ENCODE measurements at regions of chr6 and their contacts with region 1.

Region 1: DNA sequence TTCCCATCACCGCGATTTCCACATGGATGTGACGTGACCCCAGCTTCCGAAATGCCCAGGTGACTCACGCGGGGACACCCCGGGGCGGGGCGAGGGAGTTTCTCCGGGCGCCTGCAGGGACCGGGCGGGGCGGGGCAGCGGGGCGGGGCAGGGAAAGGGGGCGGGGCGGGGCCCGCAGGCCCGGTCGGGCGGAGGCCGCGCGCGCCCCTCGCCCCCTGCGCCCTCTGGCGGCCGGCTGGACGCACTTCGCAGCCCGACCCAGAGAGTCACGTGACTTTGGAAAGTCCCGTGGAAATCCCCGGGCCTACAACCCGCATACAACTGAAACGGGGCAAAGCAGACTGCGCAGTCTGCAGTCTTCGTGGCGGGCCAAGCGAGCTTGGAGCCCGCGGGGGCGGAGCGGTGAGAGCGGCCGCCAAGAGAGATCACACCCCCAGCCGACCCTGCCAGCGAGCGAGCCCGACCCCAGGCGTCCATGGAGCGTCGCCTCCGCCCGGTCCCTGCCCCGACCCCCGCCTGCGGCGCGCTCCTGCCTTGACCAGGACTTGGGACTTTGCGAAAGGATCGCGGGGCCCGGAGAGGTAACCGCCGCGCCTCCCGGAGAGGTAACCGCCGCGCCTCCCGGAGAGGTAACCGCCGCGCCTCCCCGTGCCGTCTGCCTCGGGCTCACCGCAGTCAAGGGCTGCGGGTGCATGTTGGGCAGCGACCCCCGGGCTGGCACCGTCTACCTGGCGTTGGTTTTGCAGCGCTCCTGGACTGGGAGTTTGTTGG is at the start of gene TNFAIP3:
- DNase-seq: peak; percentile 96 to 97 (median 97)
- H3K4me3 ChIP-seq: peak within 1 kb of the TSS; percentile 78 to 93
- H3K4me3 Mint-ChIP-seq: peak within 1 kb of the TSS; percentile 89 to 100 (median 96)
- H3K27ac ChIP-seq: peak within 1 kb of the TSS; percentile 99
- H3K27ac Mint-ChIP-seq: peak within 1 kb of the TSS; percentile 96 to 99 (median 99)
- H3K4me1 ChIP-seq: peaks cover 32% of the 10 kb centered on the region
- H3K4me1 Mint-ChIP-seq: peaks cover 29 to 68% (median 42%) of the 10 kb centered on the region in 4 donors
- H3K27me3 ChIP-seq: no peaks in the 10 kb centered on the region
- H3K27me3 Mint-ChIP-seq: peaks cover 0 to 4% of the 10 kb centered on the region in 2 donors
- total RNA-seq, gene TNFAIP3: 145 to 165 TPM

Region 2: GRCh38 chr6:137707590-137708360 is 159.3 kb before region 1 on chr6:
- CTCF ChIA-PET with region 1: interaction called, 74 read pairs
- POLR2A ChIA-PET with region 1: interaction called, 134 read pairs
- intact Hi-C with region 1: loop called (anchors 1 kb)
- DNase-seq: peak; percentile 91 to 97 (median 96)
- H3K4me3 ChIP-seq: peak overlapping the region in 1 of 2 donors; percentile 36
- H3K4me3 Mint-ChIP-seq: peak overlapping the region; percentile 58 to 80 (median 72)
- H3K27ac ChIP-seq: peak overlapping the region; percentile 77
- H3K27ac Mint-ChIP-seq: peak overlapping the region; percentile 93 to 99 (median 98)
- H3K4me1 ChIP-seq: peaks cover 68% of the 10 kb centered on the region
- H3K4me1 Mint-ChIP-seq: peaks cover 39 to 70% (median 57%) of the 10 kb centered on the region in 4 donors
- H3K27me3 ChIP-seq: no peaks in the 10 kb centered on the region
- H3K27me3 Mint-ChIP-seq: peaks cover 0 to under 1% of the 10 kb centered on the region in 2 donors

Region 3: DNA sequence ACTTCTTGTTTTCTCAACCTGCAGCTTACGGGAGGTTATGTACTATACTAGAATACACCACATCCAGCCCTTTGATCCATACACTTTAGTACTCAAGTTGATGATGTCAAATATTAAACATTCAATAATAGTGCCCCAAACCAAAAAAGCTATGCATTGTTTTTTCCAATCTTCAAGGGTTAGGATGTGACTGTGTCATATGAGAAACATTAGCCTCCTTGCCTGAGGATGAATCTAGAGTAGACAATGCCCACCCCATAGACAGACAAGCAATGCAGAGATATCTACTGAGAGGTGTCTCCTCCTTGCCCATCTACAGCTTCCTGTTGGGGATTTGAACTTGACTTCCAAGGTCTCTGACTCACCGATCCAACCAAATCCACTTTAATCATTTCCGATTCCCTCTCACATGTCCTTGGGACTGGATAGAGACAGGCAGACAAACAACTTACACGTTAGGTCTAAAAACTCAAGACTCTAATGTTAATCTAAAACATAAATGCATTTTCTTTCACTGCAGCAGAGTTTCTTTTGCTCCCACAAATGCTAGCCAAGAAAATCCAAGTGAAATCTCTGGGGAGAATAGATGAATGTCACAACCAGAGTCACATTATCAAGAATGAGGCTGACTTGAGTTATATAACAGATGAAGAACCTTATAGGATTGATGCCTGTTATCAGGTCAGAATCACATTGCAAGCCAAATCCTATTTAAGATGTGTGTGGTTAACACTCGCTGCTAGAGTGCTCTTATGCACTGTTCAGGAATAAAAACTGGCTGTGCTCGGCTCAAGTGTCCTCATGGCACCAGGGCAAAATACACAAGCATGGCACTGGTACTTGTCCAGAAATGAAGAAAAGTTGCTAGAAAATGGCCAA is 75.6 kb before region 1 on chr6:
- CTCF ChIA-PET with region 1: interaction called, 5 read pairs
- POLR2A ChIA-PET with region 1: interaction called, 26 read pairs
- intact Hi-C with region 1: no loop called
- DNase-seq: peak in 1 of 5 donors; percentile 7
- H3K4me3 ChIP-seq: no peak overlapping the region
- H3K4me3 Mint-ChIP-seq: peak overlapping the region; percentile 28 to 76 (median 62)
- H3K27ac ChIP-seq: peak overlapping the region; percentile 37
- H3K27ac Mint-ChIP-seq: peak overlapping the region; percentile 59 to 88 (median 79)
- H3K4me1 ChIP-seq: peaks cover 52% of the 10 kb centered on the region
- H3K4me1 Mint-ChIP-seq: peaks cover 37 to 68% (median 53%) of the 10 kb centered on the region in 4 donors
- H3K27me3 ChIP-seq: no peaks in the 10 kb centered on the region
- H3K27me3 Mint-ChIP-seq: no peaks in the 10 kb centered on the region

Region 4: DNA sequence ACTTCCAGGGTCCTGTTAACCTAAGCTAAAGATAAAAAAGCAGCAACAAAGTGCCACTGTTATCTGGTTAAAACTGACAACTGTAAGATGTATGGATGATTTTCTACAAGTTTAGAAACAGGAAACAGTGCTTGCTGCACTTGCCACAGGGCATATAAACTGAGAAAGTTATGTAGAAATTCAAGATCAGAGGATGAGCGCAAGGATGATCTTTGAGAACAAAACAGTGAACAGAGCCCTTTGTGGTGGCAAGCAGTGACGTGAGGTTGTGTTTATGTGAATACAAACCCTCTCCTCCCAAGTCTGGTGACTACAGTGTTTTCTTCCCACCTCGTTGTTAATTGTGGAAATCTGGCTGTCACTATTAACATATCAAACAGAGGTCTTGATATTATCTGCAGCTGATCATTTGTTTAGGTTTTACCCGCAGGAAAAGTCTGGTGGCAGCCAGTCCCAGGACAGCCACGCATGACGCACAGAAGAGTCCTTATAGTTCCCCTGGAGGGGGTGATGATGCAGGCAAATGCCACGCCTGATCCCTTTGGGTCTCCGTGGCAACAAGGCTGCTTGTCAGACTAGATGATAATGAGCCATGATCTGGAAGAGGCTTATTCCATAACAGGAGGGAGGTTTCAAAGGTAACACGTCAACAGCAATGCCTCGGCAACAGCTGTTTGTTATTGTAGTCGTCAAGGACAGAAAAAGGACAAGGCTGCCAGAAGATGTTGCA is 43.1 kb before region 1 on chr6:
- CTCF ChIA-PET with region 1: interaction called, 48 read pairs
- POLR2A ChIA-PET with region 1: interaction called, 55 read pairs
- intact Hi-C with region 1: loop called (anchors 1 kb)
- DNase-seq: peak; percentile 92 to 99 (median 97)
- H3K4me3 ChIP-seq: no peak overlapping the region
- H3K4me3 Mint-ChIP-seq: peak overlapping the region; percentile 52 to 87 (median 77)
- H3K27ac ChIP-seq: peak overlapping the region; percentile 95
- H3K27ac Mint-ChIP-seq: peak overlapping the region; percentile 93 to 100 (median 100)
- H3K4me1 ChIP-seq: peaks cover 74% of the 10 kb centered on the region
- H3K4me1 Mint-ChIP-seq: peaks cover 44 to 75% (median 59%) of the 10 kb centered on the region in 4 donors
- H3K27me3 ChIP-seq: no peaks in the 10 kb centered on the region
- H3K27me3 Mint-ChIP-seq: no peaks in the 10 kb centered on the region

Region 5: DNA sequence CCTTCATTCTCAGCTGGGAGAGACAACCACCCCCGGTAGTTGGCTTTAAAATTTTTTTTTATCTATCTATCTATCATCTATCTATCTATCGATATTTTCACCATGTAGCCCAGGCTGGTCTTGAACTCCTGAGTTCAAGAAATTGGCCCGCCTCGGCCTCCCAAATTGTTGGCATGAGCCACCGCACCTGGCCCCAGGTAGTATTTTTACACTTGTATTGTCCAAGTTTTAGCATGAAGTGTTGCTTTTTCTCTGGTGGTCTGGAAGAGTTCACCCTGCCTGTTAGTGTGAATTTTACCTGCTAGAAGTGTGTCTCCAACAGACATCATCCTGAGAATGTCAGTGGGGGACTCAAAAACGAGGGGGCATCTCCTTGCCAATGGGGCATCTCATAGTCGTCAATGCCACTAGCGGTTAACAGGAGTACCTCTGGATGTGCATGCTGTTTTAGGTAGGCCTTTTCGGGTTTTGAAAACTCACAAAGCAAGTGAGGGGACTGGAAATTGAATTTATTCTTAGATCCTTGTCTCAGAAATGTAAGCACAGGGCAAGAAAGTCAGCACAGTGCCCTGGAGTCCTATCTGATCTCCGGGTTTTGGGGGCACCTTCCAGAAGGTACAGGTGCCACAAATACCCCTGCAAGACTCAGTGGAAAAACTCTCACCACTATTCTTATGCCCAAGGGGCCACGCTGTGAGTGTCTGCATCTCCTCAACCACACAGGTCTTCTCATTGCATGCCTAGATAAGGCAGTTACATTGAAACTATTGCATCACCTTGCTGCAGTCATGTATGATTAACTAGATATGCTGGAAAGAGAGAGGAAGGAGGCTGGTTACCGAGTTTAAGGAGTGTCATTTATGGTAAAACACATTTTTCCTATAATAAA is 37.1 kb after region 1 on chr6:
- CTCF ChIA-PET with region 1: interaction called, 3 read pairs
- POLR2A ChIA-PET with region 1: interaction called, 3 read pairs
- intact Hi-C with region 1: loop called (anchors 2 kb)
- DNase-seq: no peak
- H3K4me3 ChIP-seq: no peak overlapping the region
- H3K4me3 Mint-ChIP-seq: peak overlapping the region; percentile 13 to 85 (median 72)
- H3K27ac ChIP-seq: no peak overlapping the region
- H3K27ac Mint-ChIP-seq: peak overlapping the region in 2 of 7 donors; percentile 2 to 70
- H3K4me1 ChIP-seq: peaks cover 15% of the 10 kb centered on the region
- H3K4me1 Mint-ChIP-seq: peaks cover 12 to 33% (median 17%) of the 10 kb centered on the region in 4 donors
- H3K27me3 ChIP-seq: no peaks in the 10 kb centered on the region
- H3K27me3 Mint-ChIP-seq: no peaks in the 10 kb centered on the region

Region 6: DNA sequence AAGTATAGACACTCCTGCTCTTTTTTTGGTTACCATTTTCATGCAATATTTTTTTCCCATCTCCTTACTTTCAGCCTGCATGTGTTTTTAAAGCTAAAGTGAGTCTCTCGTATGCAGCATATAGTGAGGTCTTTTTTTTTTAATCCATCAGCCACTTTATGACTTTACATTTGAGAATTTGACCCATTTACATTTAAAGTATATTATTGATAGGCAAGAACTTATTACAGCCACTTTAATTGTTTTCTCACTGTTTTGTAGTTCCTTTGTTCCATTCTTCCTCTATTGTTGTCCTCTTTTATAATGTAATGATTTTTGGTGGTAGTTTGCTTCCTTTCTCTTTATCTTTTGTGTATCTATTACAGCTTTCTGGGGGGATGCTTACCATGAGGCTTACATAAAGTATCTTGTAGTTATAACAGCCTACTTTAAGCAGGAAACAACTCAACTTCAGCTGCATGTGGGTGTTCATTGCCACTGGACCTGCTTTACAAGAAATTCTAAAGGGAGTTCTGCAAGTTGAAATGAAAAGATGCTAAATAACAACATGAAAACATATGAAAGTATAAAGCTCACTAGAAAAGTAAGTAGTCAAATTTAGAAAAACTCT is 71.8 kb after region 1 on chr6:
- CTCF ChIA-PET with region 1: interaction called, 97 read pairs
- POLR2A ChIA-PET with region 1: interaction called, 12 read pairs
- intact Hi-C with region 1: no loop called
- DNase-seq: no peak
- H3K4me3 ChIP-seq: no peak overlapping the region
- H3K4me3 Mint-ChIP-seq: no peak overlapping the region
- H3K27ac ChIP-seq: no peak overlapping the region
- H3K27ac Mint-ChIP-seq: peak overlapping the region in 1 of 7 donors; percentile 8
- H3K4me1 ChIP-seq: no peaks in the 10 kb centered on the region
- H3K4me1 Mint-ChIP-seq: peaks cover 1 to 9% (median 7%) of the 10 kb centered on the region in 4 donors
- H3K27me3 ChIP-seq: no peaks in the 10 kb centered on the region
- H3K27me3 Mint-ChIP-seq: no peaks in the 10 kb centered on the region

Region 7: GRCh38 chr6:137975188-137975940 is 108.3 kb after region 1 on chr6:
- CTCF ChIA-PET with region 1: interaction called, 7 read pairs
- POLR2A ChIA-PET with region 1: interaction called, 20 read pairs
- intact Hi-C with region 1: loop called (anchors 1 kb)
- DNase-seq: peak; percentile 62 to 71 (median 67)
- H3K4me3 ChIP-seq: no peak overlapping the region
- H3K4me3 Mint-ChIP-seq: peak overlapping the region; percentile 67 to 93 (median 82)
- H3K27ac ChIP-seq: peak overlapping the region; percentile 57
- H3K27ac Mint-ChIP-seq: peak overlapping the region; percentile 87 to 99 (median 97)
- H3K4me1 ChIP-seq: peaks cover 37% of the 10 kb centered on the region
- H3K4me1 Mint-ChIP-seq: peaks cover 30 to 57% (median 34%) of the 10 kb centered on the region in 4 donors
- H3K27me3 ChIP-seq: no peaks in the 10 kb centered on the region
- H3K27me3 Mint-ChIP-seq: no peaks in the 10 kb centered on the region

Measured in CD4-positive, alpha-beta memory T cell (primary cell).